Mammary epithelial cell (primary cell): ENCODE measurements at regions of chr20 and their contacts with region 1.

Region 1: GRCh38 chr20:54219751-54220426 is 12.0 kb downstream of the PFDN4 start:
- DNase-seq: peak; percentile 28
- H3K4me3 ChIP-seq: no peak overlapping the region
- H3K27ac ChIP-seq: no peak overlapping the region
- H3K4me1 ChIP-seq: peaks cover 4% of the 10 kb centered on the region
- H3K27me3 ChIP-seq: no peaks in the 10 kb centered on the region
- CTCF ChIP-seq: peak; percentile 51 to 66

Region 2: DNA sequence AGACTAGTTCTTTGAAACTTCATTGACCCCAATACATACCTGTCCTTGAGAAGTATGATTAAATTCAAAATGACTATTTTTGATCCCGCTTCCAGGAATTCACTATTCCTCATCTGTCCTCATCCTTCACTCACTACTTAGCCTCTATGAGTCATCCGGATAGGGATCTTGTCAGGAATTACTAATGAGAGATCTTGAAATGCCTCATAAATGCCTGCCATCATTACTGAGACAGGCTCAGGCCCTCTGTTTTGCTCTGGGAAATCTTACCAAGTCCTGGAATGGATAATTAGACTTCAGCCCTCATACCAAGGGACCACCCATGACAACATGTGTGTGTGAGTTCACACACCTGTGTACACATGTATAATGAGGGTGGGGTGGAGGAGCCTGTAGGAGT is 43.3 kb before region 1 on chr20:
- CTCF ChIA-PET with region 1: no interaction called
- dilution Hi-C with region 1: no loop called
- in situ Hi-C with region 1: no loop called
- intact Hi-C with region 1: no loop called
- DNase-seq: peak; percentile 51
- H3K4me3 ChIP-seq: no peak overlapping the region
- H3K27ac ChIP-seq: peak overlapping the region; percentile 51
- H3K4me1 ChIP-seq: peaks cover 55% of the 10 kb centered on the region
- H3K27me3 ChIP-seq: no peaks in the 10 kb centered on the region
- CTCF ChIP-seq: no peak

Region 3: GRCh38 chr20:54257071-54257840 is 37.4 kb after region 1 on chr20:
- CTCF ChIA-PET with region 1: no interaction called
- dilution Hi-C with region 1: no loop called
- in situ Hi-C with region 1: no loop called
- intact Hi-C with region 1: loop called (anchors 2 kb)
- DNase-seq: peak; percentile 92
- H3K4me3 ChIP-seq: no peak overlapping the region
- H3K27ac ChIP-seq: peak overlapping the region; percentile 44
- H3K4me1 ChIP-seq: peaks cover 29% of the 10 kb centered on the region
- H3K27me3 ChIP-seq: no peaks in the 10 kb centered on the region
- CTCF ChIP-seq: no peak

Region 4: DNA sequence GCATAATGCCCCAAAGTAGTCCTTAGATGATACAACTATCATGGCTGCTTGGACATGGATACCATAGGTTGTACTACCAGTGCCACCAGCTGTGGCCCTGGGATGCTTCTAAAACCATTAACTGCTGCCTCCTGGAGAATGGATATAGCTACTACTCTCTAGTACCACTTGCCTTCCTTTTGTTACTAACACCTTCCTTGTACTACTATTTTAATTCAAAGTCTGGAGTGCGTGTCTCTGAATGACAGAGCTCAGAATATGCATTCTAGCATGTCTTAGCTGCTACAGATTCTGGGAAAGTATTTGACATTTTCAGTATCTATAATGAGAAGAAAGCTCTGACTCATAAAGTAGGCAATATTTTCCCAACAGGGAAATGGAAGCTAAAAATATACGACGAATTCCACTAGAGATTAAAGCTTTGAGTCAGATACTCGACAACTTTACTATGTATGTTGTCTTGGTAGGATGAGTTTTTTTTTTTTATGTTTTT is 100.3 kb after region 1 on chr20:
- CTCF ChIA-PET with region 1: interaction called, 6 read pairs
- dilution Hi-C with region 1: no loop called
- in situ Hi-C with region 1: no loop called
- intact Hi-C with region 1: loop called (anchors 1 kb)
- DNase-seq: no peak
- H3K4me3 ChIP-seq: no peak overlapping the region
- H3K27ac ChIP-seq: no peak overlapping the region
- H3K4me1 ChIP-seq: no peaks in the 10 kb centered on the region
- H3K27me3 ChIP-seq: peaks cover 2% of the 10 kb centered on the region
- CTCF ChIP-seq: no peak

Region 5: DNA sequence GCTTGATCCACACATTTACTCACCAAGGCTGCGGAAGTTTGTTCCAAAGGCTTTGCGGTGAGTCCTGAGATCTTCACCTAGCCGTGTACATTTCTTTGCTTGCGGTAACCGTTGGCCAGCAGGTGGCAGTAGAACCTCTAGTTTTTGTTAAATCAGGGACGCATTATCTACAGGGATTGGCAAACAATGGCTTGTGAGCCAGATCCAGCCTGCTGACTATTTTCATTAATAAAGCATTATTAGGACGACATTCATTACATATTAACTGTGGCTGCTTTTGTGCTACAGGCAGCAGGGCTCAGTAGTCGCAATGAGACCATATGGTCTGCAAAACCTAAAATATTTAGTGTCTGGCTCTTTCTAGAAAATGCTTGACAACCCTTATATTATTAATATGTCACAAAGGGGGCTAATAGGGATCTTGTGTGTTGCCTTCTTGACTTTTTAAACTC is 429.6 kb after region 1 on chr20:
- CTCF ChIA-PET with region 1: no interaction called
- dilution Hi-C with region 1: no loop called
- in situ Hi-C with region 1: loop called (anchors 5 kb)
- intact Hi-C with region 1: loop called (anchors 1 kb)
- DNase-seq: peak; percentile 69
- H3K4me3 ChIP-seq: no peak overlapping the region
- H3K27ac ChIP-seq: no peak overlapping the region
- H3K4me1 ChIP-seq: no peaks in the 10 kb centered on the region
- H3K27me3 ChIP-seq: no peaks in the 10 kb centered on the region
- CTCF ChIP-seq: peak; percentile 76 to 80